ENCODE measurements at regions of chr16 and their contacts with region 1.

Region 1: GRCh38 chr16:1677802-1678496 is at the start of gene JPT2:
- DNase-seq: peak; percentile 98
- H3K4me3 ChIP-seq: peak within 1 kb of the TSS; percentile 79 to 97 (median 97)
- H3K27ac ChIP-seq: peak within 1 kb of the TSS; percentile 88
- H3K4me1 ChIP-seq: peaks cover 33% of the 10 kb centered on the region
- H3K27me3 ChIP-seq: no peaks in the 10 kb centered on the region
- CTCF ChIP-seq: no peak
- total RNA-seq, gene JPT2: 53.0 to 117 TPM

Region 2: DNA sequence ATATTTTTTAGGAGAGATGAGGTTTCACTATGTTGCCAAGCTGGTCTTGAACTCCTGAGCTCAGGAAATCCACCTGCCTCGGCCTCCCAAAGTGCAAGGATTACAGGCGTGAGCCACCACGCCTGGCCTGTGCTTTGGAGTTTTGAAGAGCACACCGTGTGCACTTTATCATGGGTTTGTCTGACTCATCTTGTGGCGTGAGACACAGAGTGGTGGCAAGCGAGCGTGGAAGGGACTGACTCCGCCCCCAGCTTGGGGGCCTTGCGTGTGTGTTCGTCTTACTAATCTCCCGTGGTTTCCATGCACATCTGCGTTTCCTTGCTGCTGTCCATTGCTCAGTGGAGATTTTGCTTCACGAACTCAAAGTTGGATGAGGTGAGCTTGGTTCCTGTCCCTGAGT is 42.9 kb before region 1 on chr16:
- CTCF ChIA-PET with region 1: no interaction called
- dilution Hi-C with region 1: loop called (anchors 5 kb)
- in situ Hi-C with region 1: no loop called
- intact Hi-C with region 1: no loop called
- DNase-seq: no peak
- H3K4me3 ChIP-seq: no peak overlapping the region
- H3K27ac ChIP-seq: no peak overlapping the region
- H3K4me1 ChIP-seq: no peaks in the 10 kb centered on the region
- H3K27me3 ChIP-seq: no peaks in the 10 kb centered on the region
- CTCF ChIP-seq: no peak

Region 3: GRCh38 chr16:1691276-1691675 is 13.3 kb after region 1 on chr16:
- CTCF ChIA-PET with region 1: no interaction called
- dilution Hi-C with region 1: no loop called
- in situ Hi-C with region 1: no loop called
- intact Hi-C with region 1: loop called (anchors 1 kb)
- DNase-seq: peak; percentile 75
- H3K4me3 ChIP-seq: no peak overlapping the region
- H3K27ac ChIP-seq: peak overlapping the region; percentile 97
- H3K4me1 ChIP-seq: peaks cover 56% of the 10 kb centered on the region
- H3K27me3 ChIP-seq: no peaks in the 10 kb centered on the region
- CTCF ChIP-seq: peak; percentile 19 to 48

Region 4: GRCh38 chr16:1745181-1745899 is 67.4 kb after region 1 on chr16:
- CTCF ChIA-PET with region 1: interaction called, 3 read pairs
- dilution Hi-C with region 1: loop called (anchors 5 kb)
- in situ Hi-C with region 1: no loop called
- intact Hi-C with region 1: no loop called
- DNase-seq: peak; percentile 75
- H3K4me3 ChIP-seq: no peak overlapping the region
- H3K27ac ChIP-seq: no peak overlapping the region
- H3K4me1 ChIP-seq: peaks cover 19% of the 10 kb centered on the region
- H3K27me3 ChIP-seq: no peaks in the 10 kb centered on the region
- CTCF ChIP-seq: no peak